ENCODE measurements at regions of chr1 and their contacts with region 1.

Region 1: DNA sequence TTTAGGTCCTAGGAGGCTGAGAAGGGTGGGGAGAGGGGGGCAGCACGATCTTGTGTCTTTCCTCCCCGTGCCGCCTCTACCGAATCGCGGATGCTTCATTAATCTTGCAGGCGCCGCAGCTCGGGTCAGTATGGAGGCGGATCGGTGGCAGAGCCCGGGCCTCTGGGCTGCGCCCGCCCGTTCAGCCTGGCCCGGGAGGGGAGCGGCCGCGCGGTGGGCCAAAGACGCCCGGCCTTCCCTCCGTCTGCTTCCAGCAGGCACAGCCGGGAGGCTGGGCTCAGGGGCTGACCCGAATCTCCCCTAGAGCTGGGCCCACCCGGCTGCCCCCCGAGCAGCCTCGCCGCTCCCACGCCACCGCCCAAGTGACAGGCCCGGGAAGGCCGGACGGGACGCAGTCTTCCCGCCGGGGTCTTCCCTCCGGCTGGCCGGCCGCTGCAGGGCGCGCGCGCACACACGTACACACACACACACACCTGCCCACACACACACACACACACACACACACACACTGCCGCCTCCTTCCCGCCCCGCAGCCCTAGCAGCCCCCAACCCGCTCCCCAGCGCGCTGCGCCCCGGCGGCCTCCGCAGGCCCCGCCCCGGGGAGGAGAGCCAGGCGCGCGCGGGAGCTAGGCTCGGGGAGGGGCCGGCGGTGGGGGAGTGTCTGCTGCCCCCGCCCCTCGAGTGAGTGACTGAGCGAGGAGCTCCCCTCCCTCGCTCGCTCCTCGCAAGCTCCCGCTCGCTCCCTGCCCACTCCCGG is at the start of gene C1orf21:
- DNase-seq: no peak
- ATAC-seq: peak; percentile 92
- H3K4me3 ChIP-seq: peak within 1 kb of the TSS; percentile 58 to 73 (median 65); a peak in 5 of 6 replicates
- H3K27ac ChIP-seq: no peak within 1 kb of the TSS
- H3K4me1 ChIP-seq: peaks cover 17% of the 10 kb centered on the region
- H3K27me3 ChIP-seq: peaks cover 5 to 53% of the 10 kb centered on the region in 2 experiments
- CTCF ChIP-seq: no peak
- EP300 ChIP-seq: no peak
- POLR2A ChIP-seq: no peak
- RAD21 ChIP-seq: no peak
- total RNA-seq, gene C1orf21: not detected in 2 replicates

Region 2: GRCh38 chr1:184492536-184492935 is 106.0 kb after region 1 on chr1:
- CTCF ChIA-PET with region 1: no interaction called
- POLR2A ChIA-PET with region 1: no interaction called
- in situ Hi-C with region 1: no loop called
- intact Hi-C with region 1: loop called (anchors 1 kb)
- DNase-seq: no peak
- ATAC-seq: peak; percentile 12; the same call in 2 of the 3 replicates
- H3K4me3 ChIP-seq: peak overlapping the region in 2 of 3 experiments; percentile 63; a peak in 1 of 6 replicates
- H3K27ac ChIP-seq: peak overlapping the region; percentile 70
- H3K4me1 ChIP-seq: peaks cover 34% of the 10 kb centered on the region
- H3K27me3 ChIP-seq: no peaks in the 10 kb centered on the region
- CTCF ChIP-seq: no peak
- EP300 ChIP-seq: no peak
- POLR2A ChIP-seq: no peak
- RAD21 ChIP-seq: no peak

Region 3: DNA sequence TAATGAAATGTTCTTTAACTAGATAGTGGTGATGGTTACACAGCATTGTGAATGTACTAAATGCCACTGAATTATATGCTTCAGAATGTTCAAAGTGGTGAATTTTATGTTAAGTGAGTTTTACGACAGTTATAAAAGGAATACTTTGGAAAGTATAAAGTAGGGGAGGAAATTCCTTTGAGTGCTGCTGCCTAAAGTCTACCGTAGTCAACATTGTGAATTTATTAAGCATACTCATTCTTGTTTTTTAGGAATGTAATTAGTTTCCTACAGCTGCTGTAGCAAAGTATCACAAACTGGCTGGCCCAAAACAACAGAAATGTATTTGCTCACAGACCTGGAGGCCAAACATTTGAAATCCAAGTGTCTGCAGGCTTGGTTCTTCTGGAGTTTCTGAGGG is 843.5 kb after region 1 on chr1:
- CTCF ChIA-PET with region 1: no interaction called
- POLR2A ChIA-PET with region 1: no interaction called
- in situ Hi-C with region 1: no loop called
- intact Hi-C with region 1: no loop called
- DNase-seq: no peak
- ATAC-seq: no peak
- H3K4me3 ChIP-seq: no peak overlapping the region
- H3K27ac ChIP-seq: no peak overlapping the region
- H3K4me1 ChIP-seq: peaks cover 9% of the 10 kb centered on the region
- H3K27me3 ChIP-seq: no peaks in the 10 kb centered on the region
- CTCF ChIP-seq: no peak
- EP300 ChIP-seq: no peak
- POLR2A ChIP-seq: no peak
- RAD21 ChIP-seq: no peak